Sciatic nerve (tissue), 2 donors: ENCODE measurements at regions of chr10 and their contacts with region 1.

Region 1: DNA sequence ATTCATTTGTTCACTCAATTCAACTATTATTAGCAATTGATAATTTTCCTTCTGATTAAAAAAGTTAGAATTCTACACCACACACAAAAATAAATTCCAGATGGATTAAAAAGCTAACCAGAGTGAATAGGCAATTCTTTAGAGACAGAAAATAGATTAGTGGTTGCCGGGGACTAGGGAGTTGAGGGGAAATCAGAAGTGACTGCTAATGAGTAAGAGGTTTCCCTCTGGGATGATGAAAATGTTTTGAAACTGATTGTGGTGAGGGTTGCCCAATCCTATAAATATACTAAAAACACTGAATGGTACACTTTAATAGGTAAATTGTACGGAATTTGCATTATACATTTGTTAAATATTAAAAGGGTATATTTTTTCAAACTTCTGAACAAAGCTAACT is 214.9 kb downstream of the GPAM start:
- DNase-seq: no peak
- ATAC-seq: no peak

Region 2: GRCh38 chr10:113347508-113347907 is 1378.9 kb after region 1 on chr10:
- intact Hi-C with region 1: loop called (anchors 10 kb)
- DNase-seq: no peak
- ATAC-seq: peak; percentile 57